SK-N-SH (cell line): ENCODE measurements at regions of chr19 and their contacts with region 1.

Region 1: GRCh38 chr19:33771384-33772101 is 25.1 kb upstream of the KCTD15 start:
- DNase-seq: peak; percentile 92
- H3K4me3 ChIP-seq: no peak overlapping the region; a peak in 1 of 4 replicates
- H3K27ac ChIP-seq: no peak overlapping the region
- H3K4me1 ChIP-seq: peaks cover 0 to 32% of the 10 kb centered on the region in 2 experiments; a peak in 1 of 4 replicates
- H3K27me3 ChIP-seq: no peaks in the 10 kb centered on the region
- CTCF ChIP-seq: peak; percentile 79
- EP300 ChIP-seq: no peak
- RAD21 ChIP-seq: peak; percentile 98

Region 2: GRCh38 chr19:33235269-33235995 is 536.1 kb before region 1 on chr19:
- CTCF ChIA-PET with region 1: interaction called, 41 read pairs
- POLR2A ChIA-PET with region 1: no interaction called
- DNase-seq: peak; percentile 91
- H3K4me3 ChIP-seq: peak overlapping the region in 1 of 2 experiments; percentile 40; a peak in 1 of 4 replicates
- H3K27ac ChIP-seq: no peak overlapping the region
- H3K4me1 ChIP-seq: peaks cover 0 to 8% of the 10 kb centered on the region in 2 experiments; a peak in 1 of 4 replicates
- H3K27me3 ChIP-seq: no peaks in the 10 kb centered on the region
- CTCF ChIP-seq: peak; percentile 88
- EP300 ChIP-seq: no peak
- RAD21 ChIP-seq: peak; percentile 80

Region 3: DNA sequence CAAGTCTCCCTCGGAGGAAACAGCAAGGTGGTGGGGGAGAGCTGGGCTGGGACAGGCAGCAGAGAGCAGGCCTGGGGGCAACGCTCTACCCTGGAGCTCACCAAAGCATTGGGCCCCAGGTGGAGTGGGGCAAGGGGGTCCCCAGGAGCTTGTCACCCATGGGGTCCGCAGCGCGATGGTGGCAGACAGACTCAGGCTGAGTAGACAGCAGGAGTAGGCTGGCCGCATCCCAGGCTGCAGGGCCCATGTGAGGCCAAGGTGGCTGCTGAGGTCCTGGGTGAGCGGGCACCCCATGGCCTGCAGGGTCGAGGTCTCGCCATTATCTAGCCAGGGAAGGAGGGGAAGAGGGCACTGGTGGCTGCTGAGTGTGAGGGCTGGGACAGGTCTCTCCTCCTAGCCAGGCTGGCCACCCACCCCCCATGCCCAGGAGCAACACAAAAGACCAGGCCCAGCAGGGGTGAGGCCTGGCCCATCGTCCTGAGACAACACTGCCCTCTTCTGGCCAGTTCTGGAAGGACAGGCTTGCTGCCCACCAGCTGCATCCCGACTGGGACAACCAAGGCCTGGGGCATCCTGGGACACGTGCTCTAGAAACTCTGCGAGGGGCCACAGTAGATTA is 364.9 kb before region 1 on chr19:
- CTCF ChIA-PET with region 1: interaction called, 43 read pairs
- POLR2A ChIA-PET with region 1: no interaction called
- DNase-seq: peak; percentile 94
- H3K4me3 ChIP-seq: no peak overlapping the region
- H3K27ac ChIP-seq: no peak overlapping the region; a peak in 1 of 4 replicates
- H3K4me1 ChIP-seq: peaks cover 0 to 28% of the 10 kb centered on the region in 2 experiments; a peak in 1 of 4 replicates
- H3K27me3 ChIP-seq: no peaks in the 10 kb centered on the region
- CTCF ChIP-seq: peak; percentile 83
- EP300 ChIP-seq: no peak
- RAD21 ChIP-seq: peak; percentile 91

Region 4: DNA sequence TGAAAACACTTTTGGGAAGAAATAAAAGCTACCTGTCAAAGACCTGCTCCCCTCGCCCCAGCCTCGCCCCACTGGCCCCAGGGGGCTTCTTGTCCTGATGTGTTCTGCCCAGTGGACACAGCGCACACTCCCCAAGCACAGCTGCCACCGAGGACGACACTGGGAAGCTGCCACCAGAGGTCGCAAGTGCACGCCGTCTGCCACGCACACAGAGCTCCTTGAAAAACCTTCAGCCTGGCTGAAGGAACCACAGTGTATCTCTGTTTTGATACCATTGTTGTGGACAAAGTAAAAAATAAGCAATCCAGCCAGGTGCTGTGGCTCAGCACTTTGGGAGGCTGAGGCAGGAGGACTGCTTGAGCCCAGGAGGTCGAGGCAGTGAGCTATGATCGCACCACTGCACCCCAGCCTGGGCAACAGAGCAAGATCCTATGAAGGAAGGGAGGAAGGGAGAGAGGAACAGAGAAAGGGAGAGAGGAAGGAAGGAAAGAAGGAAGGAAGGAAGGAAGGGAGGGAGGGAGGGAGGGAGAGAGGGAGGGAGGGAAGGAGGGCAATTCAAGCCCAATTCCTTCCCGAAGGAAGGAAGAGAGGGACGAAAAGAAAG is 340.8 kb before region 1 on chr19:
- CTCF ChIA-PET with region 1: interaction called, 137 read pairs
- POLR2A ChIA-PET with region 1: no interaction called
- DNase-seq: peak; percentile 83
- H3K4me3 ChIP-seq: peak overlapping the region in 1 of 2 experiments; percentile 28; a peak in 1 of 4 replicates
- H3K27ac ChIP-seq: peak overlapping the region in 1 of 2 experiments; percentile 73; a peak in 1 of 4 replicates
- H3K4me1 ChIP-seq: peaks cover 16 to 44% of the 10 kb centered on the region in 2 experiments
- H3K27me3 ChIP-seq: no peaks in the 10 kb centered on the region
- CTCF ChIP-seq: peak; percentile 84
- EP300 ChIP-seq: no peak
- RAD21 ChIP-seq: peak; percentile 97

Region 5: DNA sequence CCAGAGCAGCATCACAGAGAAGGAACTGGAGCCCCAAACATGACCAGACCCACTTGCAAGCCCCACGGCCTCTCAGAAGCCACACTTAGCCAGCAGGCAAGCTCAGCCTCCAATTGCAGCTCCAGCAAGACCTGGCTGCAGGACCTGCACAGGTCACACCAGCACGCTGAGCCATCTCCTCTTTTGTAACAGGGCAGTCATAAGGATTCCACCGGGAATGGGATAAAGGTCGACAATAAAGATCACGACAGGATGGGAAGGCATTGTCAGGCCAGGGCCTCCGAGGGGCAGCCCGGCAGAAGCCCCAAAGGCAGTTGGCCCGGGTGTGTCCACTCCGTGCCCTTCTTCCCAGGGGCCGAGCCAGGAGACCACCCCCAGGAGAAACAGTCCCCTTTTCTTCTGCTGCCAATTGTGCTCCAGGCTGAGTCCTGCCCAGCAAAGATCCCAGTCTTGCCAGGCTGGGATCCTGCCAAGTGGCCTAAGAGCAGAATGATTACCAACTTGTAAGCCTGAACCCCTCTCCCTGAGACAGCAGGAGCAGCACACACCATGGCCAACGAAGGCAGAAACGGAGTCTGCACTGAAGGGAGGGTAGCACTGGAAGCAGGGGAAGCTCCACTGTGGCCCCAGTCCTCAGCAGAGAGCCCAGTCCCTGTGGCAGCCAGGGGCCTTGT is 262.5 kb before region 1 on chr19:
- CTCF ChIA-PET with region 1: interaction called, 27 read pairs
- POLR2A ChIA-PET with region 1: interaction called, 3 read pairs
- DNase-seq: no peak
- H3K4me3 ChIP-seq: no peak overlapping the region
- H3K27ac ChIP-seq: peak overlapping the region in 1 of 2 experiments; percentile 97; a peak in 2 of 4 replicates
- H3K4me1 ChIP-seq: peaks cover 0 to 63% of the 10 kb centered on the region in 2 experiments; a peak in 2 of 4 replicates
- H3K27me3 ChIP-seq: no peaks in the 10 kb centered on the region
- CTCF ChIP-seq: no peak
- EP300 ChIP-seq: no peak
- RAD21 ChIP-seq: no peak

Region 6: GRCh38 chr19:33752018-33752800 is 19.3 kb before region 1 on chr19:
- CTCF ChIA-PET with region 1: interaction called, 15 read pairs
- POLR2A ChIA-PET with region 1: no interaction called
- DNase-seq: no peak
- H3K4me3 ChIP-seq: no peak overlapping the region
- H3K27ac ChIP-seq: no peak overlapping the region
- H3K4me1 ChIP-seq: peaks cover 0 to 26% of the 10 kb centered on the region in 2 experiments; a peak in 1 of 4 replicates
- H3K27me3 ChIP-seq: no peaks in the 10 kb centered on the region
- CTCF ChIP-seq: no peak
- EP300 ChIP-seq: no peak
- RAD21 ChIP-seq: no peak

Region 7: DNA sequence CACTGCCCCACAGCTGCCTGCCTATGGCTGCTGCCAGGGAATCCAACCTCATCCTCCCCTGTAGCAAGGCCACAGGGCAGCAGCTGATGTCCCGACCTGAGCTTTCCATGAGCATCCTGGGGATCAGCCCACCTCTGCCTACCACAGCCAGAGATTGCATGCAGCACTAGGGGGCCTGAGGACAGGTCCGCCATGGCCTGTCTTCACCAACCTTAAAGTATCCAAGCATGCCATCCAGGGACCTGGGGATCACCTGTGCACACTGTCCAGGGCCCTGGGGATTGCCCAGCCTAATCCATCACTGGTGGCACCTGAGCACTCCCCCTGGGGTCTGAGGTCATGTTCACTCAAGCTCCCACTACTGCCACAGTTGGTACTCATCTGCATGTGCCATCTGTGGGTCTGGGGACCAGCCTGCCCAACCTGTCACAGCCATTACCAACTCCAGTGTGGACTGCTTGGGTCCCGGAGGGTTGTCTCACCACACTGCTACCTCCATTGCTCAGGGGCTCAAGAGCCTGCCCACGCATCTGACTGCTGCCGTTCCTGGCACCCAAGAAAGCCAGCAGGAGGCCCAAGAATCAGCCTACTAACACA is 78.1 kb after region 1 on chr19:
- CTCF ChIA-PET with region 1: no interaction called
- POLR2A ChIA-PET with region 1: no interaction called
- DNase-seq: no peak
- H3K4me3 ChIP-seq: no peak overlapping the region
- H3K27ac ChIP-seq: no peak overlapping the region
- H3K4me1 ChIP-seq: no peaks in the 10 kb centered on the region
- H3K27me3 ChIP-seq: no peaks in the 10 kb centered on the region
- CTCF ChIP-seq: no peak
- EP300 ChIP-seq: no peak
- RAD21 ChIP-seq: no peak